Caco-2 (cell line): ENCODE measurements at regions of chr3 and their contacts with region 1.

Region 1: DNA sequence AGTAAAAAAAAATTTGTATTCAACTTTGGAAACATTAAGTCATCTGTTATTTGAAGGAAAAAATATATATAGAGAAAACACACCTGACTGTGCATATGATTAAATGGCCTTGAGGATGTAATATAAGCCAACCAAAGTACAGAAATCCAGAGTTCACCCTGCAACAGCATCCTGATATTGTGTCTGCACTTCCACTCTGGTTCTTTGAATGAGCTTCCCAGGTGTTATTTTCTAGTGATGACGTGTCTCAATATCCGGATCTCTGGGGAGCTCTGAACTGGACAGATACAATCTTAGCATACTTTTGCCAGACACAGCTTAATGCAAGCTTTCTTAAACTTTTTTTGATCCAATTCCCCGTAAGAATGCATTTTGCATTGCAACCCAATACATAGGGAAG is 19.5 kb upstream of the PIK3CB start:
- DNase-seq: no peak
- H3K4me3 ChIP-seq: no peak overlapping the region
- H3K4me3 Mint-ChIP-seq: no peak overlapping the region
- H3K27ac Mint-ChIP-seq: no peak overlapping the region
- H3K4me1 ChIP-seq: no peaks in the 10 kb centered on the region
- H3K4me1 Mint-ChIP-seq: peaks cover 4% of the 10 kb centered on the region
- H3K27me3 ChIP-seq: no peaks in the 10 kb centered on the region
- H3K27me3 Mint-ChIP-seq: no peaks in the 10 kb centered on the region
- CTCF ChIP-seq: no peak

Region 2: DNA sequence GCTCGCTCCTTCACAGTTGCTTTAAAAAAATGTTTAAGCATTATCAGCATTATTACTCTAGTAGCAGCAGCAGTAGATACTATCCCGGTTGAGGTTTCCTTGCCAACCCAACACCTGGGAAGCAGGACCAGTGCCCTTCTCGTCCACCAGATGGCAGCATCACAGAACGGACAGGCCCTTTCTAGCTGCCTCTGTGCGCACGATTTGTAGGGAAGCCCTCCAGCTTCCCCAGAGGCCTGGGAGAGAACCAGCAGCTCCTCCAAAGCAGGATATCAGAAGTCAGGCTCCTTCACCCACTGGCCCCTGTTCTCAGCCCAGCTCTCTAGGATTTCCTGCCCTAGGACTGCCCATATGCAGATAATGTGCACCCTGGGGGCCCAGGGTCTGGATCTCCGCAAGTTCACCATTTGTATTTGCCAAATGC is 436.6 kb before region 1 on chr3:
- CTCF ChIA-PET with region 1: no interaction called
- POLR2A ChIA-PET with region 1: no interaction called
- intact Hi-C with region 1: no loop called
- DNase-seq: peak; percentile 86 to 87
- H3K4me3 ChIP-seq: no peak overlapping the region
- H3K4me3 Mint-ChIP-seq: no peak overlapping the region
- H3K27ac Mint-ChIP-seq: no peak overlapping the region
- H3K4me1 ChIP-seq: no peaks in the 10 kb centered on the region
- H3K4me1 Mint-ChIP-seq: no peaks in the 10 kb centered on the region
- H3K27me3 ChIP-seq: no peaks in the 10 kb centered on the region
- H3K27me3 Mint-ChIP-seq: no peaks in the 10 kb centered on the region
- CTCF ChIP-seq: peak; percentile 89 to 93

Region 3: DNA sequence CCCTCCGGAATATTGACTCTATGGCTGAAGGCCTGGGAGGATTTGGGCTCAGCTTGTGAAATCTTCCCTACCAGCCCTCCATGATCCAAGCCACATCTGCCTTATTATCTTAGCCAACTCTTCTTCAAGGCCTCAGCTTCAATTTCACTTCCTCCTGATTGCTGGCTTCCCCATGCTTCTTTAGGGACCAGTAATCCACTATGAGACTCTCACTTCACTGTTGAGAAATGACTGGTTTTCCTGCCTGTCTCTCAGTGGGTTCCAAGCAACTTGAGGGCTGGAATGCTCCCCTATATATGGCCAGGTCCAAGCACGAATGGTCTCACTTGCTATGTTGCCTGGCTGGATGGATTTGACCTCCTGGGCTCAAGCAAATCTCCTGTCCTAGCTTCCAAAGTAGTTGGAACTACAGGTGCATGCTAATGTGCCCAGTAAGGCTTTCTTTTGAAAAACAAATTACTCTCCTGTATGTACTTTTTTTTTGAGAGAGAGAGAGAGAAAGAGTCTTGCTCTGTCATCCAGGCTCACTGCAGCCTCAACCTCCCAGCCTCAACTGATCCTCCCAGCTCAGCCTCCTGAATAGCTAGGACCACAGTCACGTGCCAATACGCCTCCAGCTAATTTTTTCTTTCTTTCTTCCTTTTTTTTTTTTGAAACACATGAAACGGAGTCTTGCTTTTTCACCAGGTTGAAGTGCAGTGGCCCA is 11.6 kb before region 1 on chr3:
- CTCF ChIA-PET with region 1: interaction called, 6 read pairs
- POLR2A ChIA-PET with region 1: interaction called, 10 read pairs
- intact Hi-C with region 1: no loop called
- DNase-seq: no peak
- H3K4me3 ChIP-seq: no peak overlapping the region
- H3K4me3 Mint-ChIP-seq: no peak overlapping the region
- H3K27ac Mint-ChIP-seq: no peak overlapping the region
- H3K4me1 ChIP-seq: peaks cover 20% of the 10 kb centered on the region
- H3K4me1 Mint-ChIP-seq: no peaks in the 10 kb centered on the region
- H3K27me3 ChIP-seq: no peaks in the 10 kb centered on the region
- H3K27me3 Mint-ChIP-seq: no peaks in the 10 kb centered on the region
- CTCF ChIP-seq: no peak